ENCODE measurements at regions of chr1 and their contacts with region 1.

Region 1: GRCh38 chr1:206744683-206745082 is 25.9 kb upstream of the IL19 start:
- DNase-seq: no peak
- H3K4me3 ChIP-seq: no peak overlapping the region
- H3K27ac ChIP-seq: no peak overlapping the region
- H3K4me1 ChIP-seq: no peaks in the 10 kb centered on the region
- H3K27me3 ChIP-seq: peaks cover 5 to 11% of the 10 kb centered on the region in 2 experiments
- CTCF ChIP-seq: no peak
- POLR2A ChIP-seq: no peak

Region 2: DNA sequence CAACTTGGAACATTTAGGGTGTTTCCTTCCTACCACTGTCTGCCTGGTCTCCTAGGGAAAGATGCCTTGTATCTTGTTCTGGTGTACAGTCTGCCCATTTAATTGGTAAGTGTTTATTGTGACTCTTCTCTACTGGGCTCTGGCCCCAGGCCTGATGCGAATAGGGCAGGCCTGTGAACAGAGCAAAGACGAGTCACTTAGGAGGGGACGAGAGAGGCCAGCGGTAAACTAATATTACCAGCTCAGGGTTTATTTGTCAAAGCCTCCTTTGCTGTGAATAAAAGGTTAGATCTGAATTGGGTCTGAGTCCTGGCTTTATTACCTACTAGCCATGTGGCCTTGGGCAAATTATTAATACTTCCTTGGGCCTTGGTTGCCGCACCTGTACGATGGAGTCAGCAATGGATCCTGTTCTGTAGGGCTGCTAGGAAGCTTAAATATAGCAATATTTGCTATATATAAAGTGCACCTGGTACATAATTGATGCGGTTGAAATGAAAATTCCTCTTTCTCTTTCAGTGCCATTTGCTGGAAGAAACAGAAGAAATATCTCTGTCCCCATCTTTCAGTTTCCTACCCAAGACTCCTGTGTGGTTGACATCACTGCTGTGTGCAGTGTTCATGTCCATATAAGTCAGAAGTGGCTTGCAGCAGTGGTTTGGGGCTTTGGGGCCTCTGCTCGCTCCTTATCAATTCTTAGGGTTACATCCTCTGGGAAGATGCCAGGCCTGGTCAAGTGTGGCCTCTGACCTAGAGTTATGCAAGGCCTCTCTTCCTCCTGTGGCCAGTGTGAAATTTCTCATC is 27.6 kb before region 1 on chr1:
- CTCF ChIA-PET with region 1: no interaction called
- POLR2A ChIA-PET with region 1: no interaction called
- dilution Hi-C with region 1: no loop called
- intact Hi-C with region 1: no loop called
- DNase-seq: no peak
- H3K4me3 ChIP-seq: no peak overlapping the region
- H3K27ac ChIP-seq: no peak overlapping the region
- H3K4me1 ChIP-seq: no peaks in the 10 kb centered on the region
- H3K27me3 ChIP-seq: no peaks in the 10 kb centered on the region
- CTCF ChIP-seq: no peak
- POLR2A ChIP-seq: no peak

Region 3: GRCh38 chr1:206734499-206735142 is 10.1 kb before region 1 on chr1:
- CTCF ChIA-PET with region 1: interaction called, 13 read pairs
- POLR2A ChIA-PET with region 1: interaction called, 4 read pairs
- dilution Hi-C with region 1: no loop called
- intact Hi-C with region 1: no loop called
- DNase-seq: peak; percentile 26
- H3K4me3 ChIP-seq: no peak overlapping the region
- H3K27ac ChIP-seq: no peak overlapping the region
- H3K4me1 ChIP-seq: peaks cover 13% of the 10 kb centered on the region
- H3K27me3 ChIP-seq: no peaks in the 10 kb centered on the region
- CTCF ChIP-seq: peak; percentile 59 to 60
- POLR2A ChIP-seq: no peak

Region 4: GRCh38 chr1:206784471-206784903 is 39.8 kb after region 1 on chr1:
- CTCF ChIA-PET with region 1: no interaction called
- POLR2A ChIA-PET with region 1: no interaction called
- dilution Hi-C with region 1: no loop called
- intact Hi-C with region 1: no loop called
- DNase-seq: no peak
- H3K4me3 ChIP-seq: no peak overlapping the region
- H3K27ac ChIP-seq: no peak overlapping the region
- H3K4me1 ChIP-seq: no peaks in the 10 kb centered on the region
- H3K27me3 ChIP-seq: peaks cover 2 to 3% of the 10 kb centered on the region in 2 experiments
- CTCF ChIP-seq: no peak
- POLR2A ChIP-seq: no peak